Endothelial cell of umbilical vein (primary cell): ENCODE measurements at regions of chr2 and their contacts with region 1.

Region 1: GRCh38 chr2:224284134-224284946 is 117.6 kb downstream of the FAM124B start:
- DNase-seq: peak; percentile 60
- H3K4me3 ChIP-seq: no peak overlapping the region
- H3K27ac ChIP-seq: no peak overlapping the region
- H3K4me1 ChIP-seq: no peaks in the 10 kb centered on the region
- H3K27me3 ChIP-seq: peaks cover 6 to 10% of the 10 kb centered on the region in 2 experiments
- CTCF ChIP-seq: peak; percentile 12 to 14
- POLR2A ChIP-seq: no peak

Region 2: DNA sequence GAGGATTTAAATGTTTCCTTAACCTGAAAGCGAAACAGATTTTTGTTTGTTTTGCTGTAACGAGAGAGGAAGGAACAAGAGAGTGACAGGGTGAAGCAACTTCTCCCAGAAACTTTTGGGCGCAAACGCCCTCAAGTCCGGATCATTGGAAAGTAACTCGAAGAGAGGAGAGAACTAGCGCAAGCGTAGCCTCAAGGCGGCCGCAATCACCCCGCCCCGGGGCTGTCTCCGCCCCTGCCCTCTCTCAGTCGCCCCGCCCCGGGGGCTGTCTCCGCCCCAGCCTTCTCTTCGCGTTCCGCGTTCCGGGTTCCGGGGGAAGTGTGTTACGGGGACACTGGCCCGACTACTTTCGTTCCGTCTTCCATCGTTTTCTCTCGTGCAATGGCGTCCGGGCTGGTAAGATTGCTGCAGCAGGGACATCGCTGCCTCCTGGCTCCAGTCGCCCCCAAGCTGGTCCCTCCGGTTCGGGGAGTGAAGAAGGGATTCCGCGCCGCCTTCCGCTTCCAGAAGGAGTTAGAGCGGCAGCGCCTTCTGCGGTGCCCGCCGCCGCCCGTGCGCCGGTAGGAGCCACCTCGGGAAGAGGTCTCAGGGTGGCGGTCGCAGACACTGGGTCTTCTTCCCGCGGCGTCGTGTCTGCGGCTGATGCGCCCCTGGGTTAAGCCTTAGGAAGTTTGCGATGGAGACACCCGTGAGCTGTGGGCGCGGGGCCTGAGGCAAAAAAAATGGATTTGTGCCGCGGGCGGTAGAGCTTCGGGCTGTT is 327.1 kb before region 1 on chr2 and contains the start of gene MRPL44:
- CTCF ChIA-PET with region 1: interaction called, 10 read pairs
- POLR2A ChIA-PET with region 1: no interaction called
- dilution Hi-C with region 1: no loop called
- intact Hi-C with region 1: no loop called
- DNase-seq: peak; percentile 95
- H3K4me3 ChIP-seq: peak within 1 kb of the TSS; percentile 89 to 99 (median 95)
- H3K27ac ChIP-seq: peak within 1 kb of the TSS; percentile 58
- H3K4me1 ChIP-seq: peaks cover 38% of the 10 kb centered on the region
- H3K27me3 ChIP-seq: no peaks in the 10 kb centered on the region
- CTCF ChIP-seq: no peak
- POLR2A ChIP-seq: peak; percentile 90
- total RNA-seq, gene MRPL44: 27.7 and 31.5 TPM in 2 replicates

Region 3: DNA sequence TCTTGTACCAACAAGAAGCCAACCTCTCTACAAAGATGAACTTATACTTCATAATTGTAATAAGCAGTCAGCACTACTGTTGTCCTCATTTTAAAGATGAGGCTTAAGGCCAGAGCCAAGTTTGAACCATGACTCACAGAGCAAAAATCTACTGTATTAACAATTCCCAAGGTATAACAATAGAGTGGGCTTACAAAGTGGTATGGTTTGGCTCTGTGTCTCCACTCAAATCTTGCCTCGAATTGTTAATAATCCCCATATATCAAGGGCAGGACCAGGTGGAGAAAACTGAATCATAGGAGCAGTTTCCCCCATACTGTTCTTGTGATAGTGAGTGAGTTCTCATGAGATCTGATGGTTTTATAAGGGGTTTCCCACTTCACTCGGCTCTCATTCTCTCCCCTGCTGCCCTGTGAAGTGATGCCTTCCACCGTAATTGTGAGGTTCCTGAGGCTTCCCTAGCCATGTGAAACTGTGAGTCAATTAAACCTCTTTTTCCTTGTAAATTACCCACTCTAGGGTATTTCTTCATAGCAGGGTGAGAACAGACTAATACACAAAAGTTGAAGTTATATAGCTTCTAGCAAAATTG is 307.6 kb before region 1 on chr2:
- CTCF ChIA-PET with region 1: interaction called, 545 read pairs
- POLR2A ChIA-PET with region 1: no interaction called
- dilution Hi-C with region 1: no loop called
- intact Hi-C with region 1: no loop called
- DNase-seq: peak; percentile 81
- H3K4me3 ChIP-seq: no peak overlapping the region
- H3K27ac ChIP-seq: peak overlapping the region; percentile 20
- H3K4me1 ChIP-seq: peaks cover 6% of the 10 kb centered on the region
- H3K27me3 ChIP-seq: no peaks in the 10 kb centered on the region
- CTCF ChIP-seq: no peak
- POLR2A ChIP-seq: no peak

Region 4: DNA sequence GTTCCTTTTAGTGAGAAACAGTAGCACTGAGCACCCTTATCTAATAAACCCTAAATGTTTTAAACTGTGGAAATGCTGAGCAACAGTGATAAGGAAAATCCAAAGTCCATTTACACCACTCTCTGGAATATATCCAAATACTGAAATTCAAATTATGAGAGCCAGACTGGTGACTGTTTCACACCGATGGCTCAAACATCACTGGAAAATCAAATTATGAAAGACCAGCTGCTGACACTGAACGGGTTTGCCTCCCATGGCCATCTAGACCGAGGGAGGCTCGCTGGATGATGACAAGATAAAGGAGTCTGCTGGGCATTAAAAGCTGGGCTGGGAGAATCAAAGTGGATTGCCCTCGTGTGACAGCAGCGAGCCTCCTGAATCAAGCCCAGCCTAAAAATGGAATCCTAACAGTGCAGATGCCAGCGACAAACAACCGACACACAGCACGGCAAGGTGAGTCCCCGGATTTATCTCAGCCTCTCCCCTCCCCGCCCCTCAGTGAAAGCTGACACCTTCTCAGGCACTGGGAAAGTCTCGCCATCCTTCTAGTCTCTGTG is 275.6 kb before region 1 on chr2:
- CTCF ChIA-PET with region 1: interaction called, 11 read pairs
- POLR2A ChIA-PET with region 1: no interaction called
- dilution Hi-C with region 1: loop called (anchors 25 kb)
- intact Hi-C with region 1: no loop called
- DNase-seq: no peak
- H3K4me3 ChIP-seq: no peak overlapping the region
- H3K27ac ChIP-seq: no peak overlapping the region
- H3K4me1 ChIP-seq: peaks cover 10% of the 10 kb centered on the region
- H3K27me3 ChIP-seq: no peaks in the 10 kb centered on the region
- CTCF ChIP-seq: no peak
- POLR2A ChIP-seq: no peak

Region 5: GRCh38 chr2:224039124-224039940 is 245.0 kb before region 1 on chr2 and contains the start of gene SERPINE2:
- CTCF ChIA-PET with region 1: interaction called, 22 read pairs
- POLR2A ChIA-PET with region 1: no interaction called
- dilution Hi-C with region 1: no loop called
- intact Hi-C with region 1: loop called (anchors 1 kb)
- DNase-seq: peak; percentile 41
- H3K4me3 ChIP-seq: peak within 1 kb of the TSS; percentile 32 to 73 (median 41)
- H3K27ac ChIP-seq: no peak within 1 kb of the TSS
- H3K4me1 ChIP-seq: peaks cover 6% of the 10 kb centered on the region
- H3K27me3 ChIP-seq: peaks cover 29 to 41% of the 10 kb centered on the region in 2 experiments
- CTCF ChIP-seq: no peak
- POLR2A ChIP-seq: no peak
- total RNA-seq, gene SERPINE2: 8.8 and 15.5 TPM in 2 replicates

Region 6: DNA sequence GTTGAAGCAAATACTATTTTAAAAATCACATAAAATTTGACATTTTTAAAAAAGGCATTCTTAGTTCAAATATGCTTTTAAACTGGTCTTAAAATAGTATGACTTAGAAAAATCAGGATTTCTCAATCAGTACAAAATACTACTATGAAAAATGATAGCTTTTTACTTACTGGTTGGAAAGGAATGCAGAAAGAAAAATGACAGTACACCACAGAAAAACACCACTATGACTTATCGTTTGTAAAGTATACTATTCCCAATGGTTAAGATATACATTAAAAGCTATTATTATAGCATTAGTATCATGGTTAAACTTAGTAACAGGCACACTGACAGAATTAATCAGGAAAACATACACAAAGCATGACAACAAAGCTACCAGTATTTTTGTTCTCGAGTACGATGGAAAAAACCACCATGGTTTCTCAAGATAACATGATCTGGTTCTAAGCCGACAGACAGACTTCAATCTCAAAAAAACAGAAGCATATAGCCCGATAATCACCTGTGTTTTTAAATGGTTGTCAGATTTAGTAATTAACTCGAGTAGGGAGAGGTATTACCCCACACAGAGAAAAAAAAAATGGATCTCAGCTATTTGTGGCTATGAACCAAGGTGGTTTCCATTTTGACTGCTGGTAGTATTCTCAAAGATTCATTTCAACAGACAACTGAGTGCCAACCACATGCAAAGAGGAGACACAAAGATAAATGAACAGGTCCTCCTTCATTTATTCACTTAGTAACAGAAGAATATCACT is 261.7 kb after region 1 on chr2:
- CTCF ChIA-PET with region 1: no interaction called
- POLR2A ChIA-PET with region 1: no interaction called
- dilution Hi-C with region 1: no loop called
- intact Hi-C with region 1: no loop called
- DNase-seq: no peak
- H3K4me3 ChIP-seq: no peak overlapping the region
- H3K27ac ChIP-seq: no peak overlapping the region
- H3K4me1 ChIP-seq: no peaks in the 10 kb centered on the region
- H3K27me3 ChIP-seq: no peaks in the 10 kb centered on the region
- CTCF ChIP-seq: no peak
- POLR2A ChIP-seq: no peak

Region 7: DNA sequence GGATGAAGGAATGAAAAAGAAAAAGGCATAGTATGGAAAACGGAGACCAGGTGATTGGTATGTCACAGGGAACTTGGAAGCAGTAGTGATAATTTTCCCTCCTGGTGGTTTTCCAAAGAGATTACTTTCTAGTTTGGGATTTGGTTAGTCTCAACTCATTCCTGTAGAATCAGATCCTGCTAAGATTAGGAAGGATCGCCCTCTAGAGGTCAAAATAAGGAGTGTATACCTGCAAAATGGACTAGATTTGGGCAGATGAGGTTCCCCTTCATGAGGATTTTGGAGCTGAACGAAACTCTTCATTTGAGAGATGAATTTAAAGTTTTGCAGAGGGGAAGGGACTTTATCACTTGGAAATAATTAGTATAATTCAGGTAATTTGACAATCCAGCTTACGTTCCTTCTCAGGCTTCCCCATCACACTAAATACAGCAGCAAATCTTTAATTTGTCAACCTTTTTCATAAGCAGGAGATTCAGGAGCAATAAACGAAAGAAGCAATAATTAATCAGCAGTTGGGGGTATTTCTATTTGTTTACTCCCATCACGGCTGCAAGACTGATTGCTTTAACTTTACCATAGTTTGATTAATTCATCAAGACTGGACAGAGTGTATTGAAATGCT is 366.6 kb after region 1 on chr2:
- CTCF ChIA-PET with region 1: interaction called, 14 read pairs
- POLR2A ChIA-PET with region 1: no interaction called
- dilution Hi-C with region 1: no loop called
- intact Hi-C with region 1: loop called (anchors 1 kb)
- DNase-seq: peak; percentile 61
- H3K4me3 ChIP-seq: no peak overlapping the region
- H3K27ac ChIP-seq: no peak overlapping the region
- H3K4me1 ChIP-seq: no peaks in the 10 kb centered on the region
- H3K27me3 ChIP-seq: no peaks in the 10 kb centered on the region
- CTCF ChIP-seq: peak; percentile 49 to 60
- POLR2A ChIP-seq: no peak